Activated CD4-positive, alpha-beta memory T cell treated with anti-CD3 and anti-CD28 coated beads, Interleukin-2, amount 10 ng/mL, durations not matched to agents 7 days and 5 days (primary cell): ENCODE measurements at regions of chr11 and their contacts with region 1.

Region 1: GRCh38 chr11:61792310-61793085 is at the starts of genes FEN1 and TMEM258:
- DNase-seq: peak; percentile 90
- H3K4me3 Mint-ChIP-seq: peak within 1 kb of the TSS; percentile 94
- H3K27ac Mint-ChIP-seq: peak within 1 kb of the TSS; percentile 96
- H3K4me1 Mint-ChIP-seq: peaks cover 60% of the 10 kb centered on the region
- H3K27me3 Mint-ChIP-seq: no peaks in the 10 kb centered on the region
- total RNA-seq, gene FEN1: 104 to 105 TPM
- total RNA-seq, gene TMEM258: 192 to 196 TPM

Region 2: DNA sequence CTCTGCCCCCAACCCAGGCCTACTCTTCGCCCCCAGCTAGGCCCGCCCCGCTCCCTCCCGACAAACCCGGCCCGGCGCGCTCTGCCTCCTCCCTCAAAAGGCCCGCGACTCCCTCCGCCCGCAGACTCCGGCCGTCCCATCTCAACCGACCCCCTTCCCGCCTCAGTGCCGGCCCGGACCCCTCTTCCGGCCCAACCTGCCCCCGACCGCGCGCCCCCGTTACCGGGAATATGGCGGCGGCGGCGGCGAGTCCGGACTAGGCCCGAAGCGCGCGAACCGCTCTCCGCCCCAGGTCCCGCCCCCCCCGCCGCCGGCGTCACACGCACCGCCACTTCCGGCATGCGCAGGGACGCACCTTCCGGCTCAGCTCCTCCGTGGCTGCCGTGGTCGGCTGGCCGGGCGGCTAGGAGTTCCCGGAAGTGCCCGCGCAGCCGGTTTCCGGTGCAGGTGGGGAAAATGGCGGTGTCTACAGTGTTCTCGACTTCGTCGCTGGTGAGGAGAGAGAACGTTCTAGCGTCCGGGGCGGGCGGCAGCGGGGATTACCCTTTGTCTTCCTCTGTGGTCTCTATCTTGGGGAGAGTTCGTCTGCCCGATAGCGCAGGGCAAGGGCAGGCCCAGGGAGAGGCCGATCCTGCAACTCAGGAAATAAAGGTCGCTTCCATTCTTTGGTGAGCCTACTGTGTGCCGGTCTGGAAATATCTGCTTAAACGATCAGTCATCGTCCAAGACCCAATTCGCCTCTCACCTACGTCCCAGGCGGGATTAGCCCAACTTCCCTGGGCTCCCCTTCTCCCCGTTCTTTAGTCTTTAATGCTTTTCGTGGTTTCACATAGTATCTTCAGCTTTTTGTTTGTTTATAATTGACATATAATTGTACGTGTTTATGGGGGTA is 362.6 kb before region 1 on chr11 and contains the starts of genes CPSF7 and SDHAF2:
- CTCF ChIA-PET with region 1: no interaction called
- POLR2A ChIA-PET with region 1: no interaction called
- DNase-seq: peak; percentile 98
- H3K4me3 Mint-ChIP-seq: peak within 1 kb of the TSS; percentile 99
- H3K27ac Mint-ChIP-seq: peak within 1 kb of the TSS; percentile 99
- H3K4me1 Mint-ChIP-seq: peaks cover 65% of the 10 kb centered on the region
- H3K27me3 Mint-ChIP-seq: no peaks in the 10 kb centered on the region
- total RNA-seq, gene CPSF7: 89.6 to 90.2 TPM
- total RNA-seq, gene SDHAF2: 47.3 to 47.5 TPM

Region 3: DNA sequence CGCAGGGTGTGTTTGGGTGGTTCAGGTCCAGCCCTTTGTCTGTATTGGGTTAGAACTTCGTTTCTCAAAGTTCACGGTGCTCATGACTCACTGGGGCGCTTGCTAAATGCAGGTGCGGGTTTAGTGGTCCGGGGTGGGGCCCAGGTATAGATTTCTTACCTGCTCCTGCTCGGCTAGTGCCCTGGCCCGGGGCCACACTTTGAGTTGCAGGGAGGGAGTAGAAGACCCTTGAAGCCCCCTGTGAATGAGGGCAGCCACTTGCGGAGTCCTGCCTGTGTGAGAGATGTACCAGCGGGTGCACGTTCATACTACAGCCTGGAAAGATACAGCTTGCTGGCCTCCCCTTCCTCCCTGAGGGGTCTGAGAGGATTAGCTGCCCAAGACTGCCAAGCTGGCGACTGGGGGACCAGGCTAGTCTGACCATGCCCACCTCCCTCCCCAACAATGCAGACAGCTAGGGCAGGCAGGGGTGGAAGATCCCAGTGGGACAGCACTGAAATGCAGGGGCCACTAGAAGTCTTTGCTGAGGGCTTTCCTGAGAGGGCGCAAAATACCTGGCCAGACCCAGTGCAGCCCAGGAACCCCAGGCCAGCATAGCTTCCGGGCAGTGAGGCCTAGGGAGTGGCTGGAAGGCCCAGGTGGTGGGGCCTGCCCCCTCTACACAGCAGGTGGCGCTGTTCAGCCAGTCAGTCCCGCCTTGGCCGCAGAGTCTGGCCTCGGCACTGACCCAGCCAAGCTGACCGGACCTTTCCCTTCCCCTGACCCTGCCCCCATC is 45.1 kb before region 1 on chr11:
- CTCF ChIA-PET with region 1: interaction called, 13 read pairs
- POLR2A ChIA-PET with region 1: no interaction called
- DNase-seq: peak; percentile 63
- H3K4me3 Mint-ChIP-seq: no peak overlapping the region
- H3K27ac Mint-ChIP-seq: no peak overlapping the region
- H3K4me1 Mint-ChIP-seq: peaks cover 2% of the 10 kb centered on the region
- H3K27me3 Mint-ChIP-seq: peaks cover 19% of the 10 kb centered on the region

Region 4: DNA sequence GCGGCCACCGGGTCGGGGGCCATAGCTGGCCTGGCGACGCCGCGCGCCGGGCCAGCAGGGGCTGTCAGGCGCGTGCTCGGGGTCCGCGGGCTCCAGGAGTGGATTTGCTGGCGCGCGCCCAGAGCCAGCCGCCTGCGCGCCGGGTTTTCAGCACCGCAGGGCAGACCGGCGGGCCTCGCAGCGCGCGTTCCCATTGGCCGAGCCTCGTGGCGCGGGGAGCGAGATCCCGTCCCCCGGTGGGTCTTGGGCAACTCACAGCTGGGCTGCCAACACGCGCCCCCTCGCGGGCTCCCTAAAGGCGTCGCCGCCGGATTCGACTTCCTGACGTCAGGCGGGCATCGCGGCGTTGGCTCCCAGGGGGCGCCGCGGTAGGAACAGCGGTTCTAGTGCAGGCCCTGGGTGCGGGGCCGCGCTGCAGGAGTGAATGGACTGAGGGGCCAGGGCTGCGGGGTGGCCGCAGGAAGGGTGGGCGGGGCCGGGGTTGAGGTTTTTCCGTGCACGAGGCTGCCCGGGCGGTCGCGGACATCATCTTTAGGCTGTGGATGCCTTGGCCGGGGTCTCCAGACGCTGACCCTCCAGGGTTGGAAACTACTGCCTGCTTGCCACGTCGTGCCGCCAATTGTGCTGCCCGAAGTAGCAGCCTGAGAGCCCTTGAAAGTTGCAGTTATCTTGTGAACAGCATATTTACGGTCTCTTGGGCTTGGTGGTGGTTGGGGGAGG is 24.4 kb after region 1 on chr11 and contains the start of gene FADS1:
- CTCF ChIA-PET with region 1: interaction called, 81 read pairs
- POLR2A ChIA-PET with region 1: interaction called, 81 read pairs
- DNase-seq: peak; percentile 88
- H3K4me3 Mint-ChIP-seq: peak within 1 kb of the TSS; percentile 97
- H3K27ac Mint-ChIP-seq: peak within 1 kb of the TSS; percentile 83
- H3K4me1 Mint-ChIP-seq: peaks cover 11% of the 10 kb centered on the region
- H3K27me3 Mint-ChIP-seq: peaks cover 11% of the 10 kb centered on the region
- total RNA-seq, gene FADS1: 63.6 to 68.2 TPM

Region 5: GRCh38 chr11:61871158-61871597 is 78.7 kb after region 1 on chr11:
- CTCF ChIA-PET with region 1: interaction called, 13 read pairs
- POLR2A ChIA-PET with region 1: interaction called, 5 read pairs
- DNase-seq: peak; percentile 71
- H3K4me3 Mint-ChIP-seq: no peak overlapping the region
- H3K27ac Mint-ChIP-seq: no peak overlapping the region
- H3K4me1 Mint-ChIP-seq: peaks cover 5% of the 10 kb centered on the region
- H3K27me3 Mint-ChIP-seq: peaks cover 2% of the 10 kb centered on the region

Region 6: GRCh38 chr11:61947486-61948210 is 155.2 kb after region 1 on chr11:
- CTCF ChIA-PET with region 1: interaction called, 39 read pairs
- POLR2A ChIA-PET with region 1: interaction called, 3 read pairs
- DNase-seq: peak; percentile 73
- H3K4me3 Mint-ChIP-seq: no peak overlapping the region
- H3K27ac Mint-ChIP-seq: no peak overlapping the region
- H3K4me1 Mint-ChIP-seq: peaks cover 2% of the 10 kb centered on the region
- H3K27me3 Mint-ChIP-seq: peaks cover 5% of the 10 kb centered on the region

Region 7: GRCh38 chr11:62108017-62108750 is 315.7 kb after region 1 on chr11:
- CTCF ChIA-PET with region 1: interaction called, 33 read pairs
- POLR2A ChIA-PET with region 1: interaction called, 5 read pairs
- DNase-seq: peak; percentile 40
- H3K4me3 Mint-ChIP-seq: no peak overlapping the region
- H3K27ac Mint-ChIP-seq: no peak overlapping the region
- H3K4me1 Mint-ChIP-seq: peaks cover 18% of the 10 kb centered on the region
- H3K27me3 Mint-ChIP-seq: peaks cover 2% of the 10 kb centered on the region